ENCODE measurements at regions of chr17 and their contacts with region 1.

Region 1: DNA sequence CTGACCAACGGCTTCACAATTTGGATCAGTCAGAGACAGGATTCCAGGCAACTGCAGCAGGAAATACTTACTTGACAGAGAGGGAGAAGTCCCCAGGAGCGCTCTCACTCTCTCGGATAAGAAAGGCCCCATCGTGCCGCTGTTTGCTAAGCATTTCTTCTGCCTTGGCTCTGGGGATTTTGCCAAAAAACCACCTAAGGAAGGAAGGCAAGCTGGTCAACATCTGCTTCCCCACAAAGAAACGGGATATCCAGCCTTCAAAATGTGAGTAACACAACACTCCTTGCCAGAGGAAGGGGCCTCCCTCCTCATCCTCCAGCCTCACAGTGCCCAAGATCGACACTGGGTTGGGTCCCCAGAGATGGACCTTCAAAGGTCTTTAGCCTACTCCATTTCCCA is 36.6 kb upstream of the SLC25A19 start:
- DNase-seq: peak in 1 of 4 donors; percentile 21
- ATAC-seq: peak; percentile 19
- H3K4me3 ChIP-seq: no peak overlapping the region
- H3K27ac ChIP-seq: peak overlapping the region; percentile 2 to 77
- H3K4me1 ChIP-seq: peaks cover 8 to 69% of the 10 kb centered on the region in 2 donors
- H3K27me3 ChIP-seq: no peaks in the 10 kb centered on the region
- CTCF ChIP-seq: no peak

Region 2: DNA sequence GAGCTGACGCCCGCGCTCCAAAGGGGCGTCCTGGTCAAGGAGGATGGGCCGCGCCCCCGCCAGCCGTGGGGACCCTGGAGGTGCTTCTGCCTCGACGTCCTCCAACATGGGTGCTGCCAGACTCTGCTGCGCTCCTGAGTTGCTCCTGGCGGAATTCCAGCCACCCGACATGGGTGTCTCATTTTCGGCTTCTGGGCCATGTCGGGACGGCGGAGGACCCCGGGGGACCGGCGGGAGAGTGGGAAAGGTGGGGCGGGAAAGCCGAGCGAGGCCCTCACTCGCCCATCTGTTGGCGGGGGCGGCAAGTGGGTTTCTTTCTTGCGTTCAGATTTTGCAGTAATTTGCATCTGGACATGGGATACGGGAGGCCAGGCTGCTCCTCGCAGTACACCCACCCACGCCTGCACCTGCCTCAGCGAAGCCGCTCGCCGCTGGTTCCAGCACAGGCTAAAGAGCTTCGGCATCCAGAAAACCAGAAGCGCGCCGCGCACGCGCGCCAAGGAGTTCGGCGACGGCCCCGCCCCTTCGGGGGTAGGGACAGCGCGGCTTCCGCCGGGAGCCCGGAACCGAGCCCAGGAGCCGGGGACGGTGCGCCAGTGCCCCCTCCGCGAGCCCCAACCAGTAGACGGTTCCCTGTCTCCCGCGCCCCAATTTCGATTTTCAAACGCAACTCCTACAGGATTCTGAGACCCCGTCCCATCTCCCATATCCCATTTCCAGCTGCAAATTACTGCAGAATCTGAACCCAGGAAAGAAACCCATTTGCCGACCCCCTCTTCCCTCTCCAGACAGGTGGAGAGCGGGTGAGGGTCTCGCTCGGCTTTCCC is 216.2 kb before region 1 on chr17 and contains the start of gene ARMC7:
- intact Hi-C with region 1: no loop called
- DNase-seq: peak; percentile 77 to 99 (median 92)
- ATAC-seq: peak; percentile 86
- H3K4me3 ChIP-seq: peak within 1 kb of the TSS; percentile 81 to 87
- H3K27ac ChIP-seq: peak within 1 kb of the TSS; percentile 69 to 84
- H3K4me1 ChIP-seq: peaks cover 17 to 66% of the 10 kb centered on the region in 2 donors
- H3K27me3 ChIP-seq: no peaks in the 10 kb centered on the region
- CTCF ChIP-seq: no peak
- polyA plus RNA-seq, gene ARMC7: 13.2 to 15.5 (median 14.8) TPM

Region 3: GRCh38 chr17:75144816-75145512 is 180.9 kb before region 1 on chr17:
- intact Hi-C with region 1: no loop called
- DNase-seq: no peak
- ATAC-seq: peak; percentile 48
- H3K4me3 ChIP-seq: no peak overlapping the region
- H3K27ac ChIP-seq: no peak overlapping the region
- H3K4me1 ChIP-seq: peaks cover 0 to 16% of the 10 kb centered on the region in 2 donors
- H3K27me3 ChIP-seq: no peaks in the 10 kb centered on the region
- CTCF ChIP-seq: no peak

Region 4: GRCh38 chr17:75380315-75380714 is 54.5 kb after region 1 on chr17:
- intact Hi-C with region 1: no loop called
- DNase-seq: no peak
- ATAC-seq: no peak
- H3K4me3 ChIP-seq: no peak overlapping the region
- H3K27ac ChIP-seq: no peak overlapping the region
- H3K4me1 ChIP-seq: peaks cover 10 to 59% of the 10 kb centered on the region in 2 donors
- H3K27me3 ChIP-seq: no peaks in the 10 kb centered on the region
- CTCF ChIP-seq: no peak

Region 5: DNA sequence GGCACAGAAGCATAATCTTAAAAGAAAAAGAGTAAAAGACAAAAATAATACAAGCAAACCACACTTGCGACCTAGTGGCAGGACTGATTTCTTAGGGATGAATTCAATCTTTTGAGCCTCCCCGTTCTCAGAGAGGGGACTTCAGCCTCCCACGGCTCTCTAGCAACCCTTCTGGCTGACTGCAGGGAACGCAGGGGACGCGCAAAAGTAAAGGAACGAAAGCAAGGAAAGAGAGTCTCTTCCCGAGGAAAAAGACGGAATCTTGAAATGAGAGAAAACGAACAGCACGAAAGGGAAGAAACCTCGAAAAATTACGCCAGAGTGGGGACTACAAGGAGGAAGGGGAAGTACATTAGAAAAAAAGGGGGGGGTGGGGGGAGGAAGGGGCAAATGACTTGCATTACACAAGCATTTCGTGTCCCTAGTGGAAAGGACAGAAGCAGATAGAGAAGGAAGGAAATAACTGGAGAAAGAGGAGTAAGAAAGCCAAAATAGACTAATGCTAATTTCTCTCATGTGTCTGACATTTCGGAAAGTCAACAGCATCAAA is 78.4 kb after region 1 on chr17:
- intact Hi-C with region 1: loop called in 1 of 2 experiments (anchors 5 kb)
- DNase-seq: peak in 3 of 4 donors; percentile 55 to 81 (median 74)
- ATAC-seq: peak; percentile 43
- H3K4me3 ChIP-seq: peak overlapping the region; percentile 89 to 99
- H3K27ac ChIP-seq: peak overlapping the region; percentile 88 to 99
- H3K4me1 ChIP-seq: peaks cover 9 to 56% of the 10 kb centered on the region in 2 donors
- H3K27me3 ChIP-seq: no peaks in the 10 kb centered on the region
- CTCF ChIP-seq: peak; percentile 67 to 68

Region 6: DNA sequence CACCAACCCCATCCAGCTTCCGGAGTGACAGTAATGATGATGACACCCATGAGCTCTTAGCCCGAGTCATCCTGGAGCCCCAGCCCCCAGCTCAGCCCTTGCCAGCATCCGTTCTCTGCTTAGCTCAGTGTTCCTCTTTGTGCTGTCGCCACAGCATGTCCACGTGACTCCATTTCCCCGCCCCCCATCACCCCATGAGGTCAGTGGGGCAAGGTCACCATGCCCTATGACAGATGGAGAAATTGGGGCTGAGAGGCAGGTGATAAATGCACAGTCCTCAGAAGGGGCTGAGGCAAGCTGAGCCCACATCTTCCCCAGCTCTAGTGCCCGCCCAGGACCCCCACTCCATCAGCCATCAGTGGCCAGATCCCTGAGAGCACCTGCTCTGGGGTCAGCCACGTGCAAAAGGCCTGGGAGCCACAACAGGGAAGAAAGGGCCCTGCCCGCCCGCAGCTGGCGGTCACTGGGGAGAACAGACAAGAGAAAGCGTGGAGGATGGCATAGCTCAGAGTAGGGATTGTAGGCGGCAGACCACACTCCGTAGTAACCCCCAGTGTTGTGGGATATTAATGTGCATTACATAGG is 412.5 kb after region 1 on chr17:
- intact Hi-C with region 1: no loop called
- DNase-seq: peak in 2 of 4 donors; percentile 83 to 93
- ATAC-seq: peak; percentile 65
- H3K4me3 ChIP-seq: no peak overlapping the region
- H3K27ac ChIP-seq: peak overlapping the region in 1 of 2 donors; percentile 60
- H3K4me1 ChIP-seq: peaks cover 0 to 19% of the 10 kb centered on the region in 2 donors
- H3K27me3 ChIP-seq: no peaks in the 10 kb centered on the region
- CTCF ChIP-seq: no peak

Measured in left lung (tissue), 14 donors.